Pancreas (tissue), 10 donors: ENCODE measurements at regions of chr11 and their contacts with region 1.

Region 1: DNA sequence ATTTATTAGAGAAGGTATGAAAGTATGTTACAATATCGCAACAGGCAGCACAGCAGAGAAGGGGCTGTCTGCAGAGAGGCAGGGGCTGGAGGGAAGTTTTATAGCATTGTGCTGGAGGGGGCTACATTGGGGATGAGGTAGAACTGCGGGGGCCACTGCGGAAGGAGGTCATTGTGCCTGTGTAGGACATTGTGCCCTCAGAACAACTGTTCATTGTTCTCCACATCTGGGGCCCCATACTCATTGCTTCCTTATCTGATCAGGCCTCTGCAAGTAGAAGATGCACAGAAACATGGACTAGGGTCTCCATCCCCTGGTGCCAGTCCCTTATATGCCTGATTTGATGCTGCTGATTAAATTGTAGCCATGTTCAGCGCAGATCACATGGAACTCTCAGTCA is 12.1 kb downstream of the NADSYN1 start:
- DNase-seq: peak in 1 of 6 donors; percentile 12
- ATAC-seq: no peak
- H3K4me3 ChIP-seq: no peak overlapping the region
- H3K27ac ChIP-seq: no peak overlapping the region
- H3K4me1 ChIP-seq: no peaks in the 10 kb centered on the region
- H3K27me3 ChIP-seq: no peaks in the 10 kb centered on the region
- CTCF ChIP-seq: no peak

Region 2: DNA sequence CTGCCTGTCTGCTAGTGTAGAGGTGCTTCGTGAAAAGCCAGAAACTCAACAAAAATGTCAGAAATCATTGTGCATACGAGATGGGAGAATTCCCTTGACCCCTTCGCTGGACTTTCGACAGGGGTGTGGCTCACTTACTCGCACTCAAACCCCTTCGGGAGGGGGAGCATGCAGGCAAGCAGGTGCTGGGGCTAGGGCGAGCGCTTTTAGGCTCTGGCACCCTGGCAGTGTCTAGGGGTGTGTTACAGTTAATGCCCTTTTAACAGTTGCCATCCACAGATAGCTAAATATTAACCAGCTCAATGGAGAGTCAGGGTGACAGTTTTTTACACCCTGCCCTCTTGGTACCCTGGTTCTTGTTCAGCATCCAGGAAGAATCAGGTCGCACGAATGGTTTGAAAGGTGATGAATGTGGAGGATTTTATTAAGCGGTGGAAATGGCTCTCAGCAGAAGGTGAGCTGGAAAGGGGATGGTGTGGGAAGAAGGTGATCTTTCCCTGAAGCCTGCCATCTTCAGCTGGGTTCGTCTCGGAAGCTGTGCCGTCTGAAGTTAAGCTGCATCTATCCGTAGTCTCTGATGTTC is 153.0 kb before region 1 on chr11:
- intact Hi-C with region 1: no loop called
- DNase-seq: peak in 1 of 6 donors; percentile 14
- ATAC-seq: no peak
- H3K4me3 ChIP-seq: no peak overlapping the region
- H3K27ac ChIP-seq: no peak overlapping the region
- H3K4me1 ChIP-seq: peaks cover 0 to 3% (median 0%) of the 10 kb centered on the region in 3 donors
- H3K27me3 ChIP-seq: no peaks in the 10 kb centered on the region
- CTCF ChIP-seq: no peak

Region 3: DNA sequence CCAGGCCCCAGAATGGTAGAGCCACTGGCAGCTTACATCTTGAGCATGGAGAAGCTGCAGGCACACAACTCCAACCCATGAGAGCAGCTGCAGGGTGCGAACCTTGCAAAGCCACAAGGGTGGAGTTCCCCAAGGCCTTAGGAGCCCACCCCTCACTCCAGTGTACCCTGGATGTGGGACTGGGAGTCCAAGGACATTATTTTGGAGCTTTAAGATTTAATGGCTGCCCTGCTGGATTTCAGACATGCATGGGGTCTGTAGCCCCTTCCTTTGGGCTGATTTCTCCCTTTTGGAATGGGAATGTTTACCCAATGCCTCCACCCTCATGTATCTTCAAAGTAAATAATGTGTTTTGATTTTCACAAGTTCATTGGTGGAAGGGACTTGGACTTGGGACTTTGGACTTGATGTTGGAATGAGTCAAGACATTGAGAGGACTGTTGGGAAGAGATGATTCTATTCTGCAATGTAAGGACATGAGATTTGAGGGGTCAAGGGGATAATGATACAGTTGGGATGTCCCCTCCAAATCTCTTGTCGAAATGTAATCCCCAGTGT is 61.0 kb after region 1 on chr11:
- intact Hi-C with region 1: loop called in 1 of 3 experiments (anchors 10 kb)
- DNase-seq: no peak
- ATAC-seq: no peak
- H3K4me3 ChIP-seq: no peak overlapping the region
- H3K27ac ChIP-seq: no peak overlapping the region
- H3K4me1 ChIP-seq: no peaks in the 10 kb centered on the region
- H3K27me3 ChIP-seq: no peaks in the 10 kb centered on the region
- CTCF ChIP-seq: no peak